Psoas muscle (tissue), 8 donors: ENCODE measurements at regions of chr3 and their contacts with region 1.

Region 1: DNA sequence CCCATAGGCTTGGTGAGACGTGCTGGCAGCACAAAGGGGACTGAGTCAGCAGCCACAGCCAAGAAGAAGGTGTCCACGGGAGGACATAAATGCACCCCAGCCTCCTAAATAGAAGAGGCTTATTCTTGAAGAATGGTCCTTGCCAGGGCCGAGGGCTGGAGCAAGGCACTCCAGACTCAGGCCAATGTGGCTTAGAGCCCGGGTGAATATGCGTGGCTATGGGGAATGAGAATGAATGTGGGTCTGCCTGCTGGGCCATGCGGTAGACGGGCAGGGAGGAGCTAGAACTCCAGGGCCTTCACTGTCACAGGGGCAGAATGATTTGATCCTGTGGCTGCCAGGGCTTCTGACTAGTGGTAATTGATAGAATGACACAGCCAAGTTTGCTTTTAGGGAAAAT is 34.0 kb downstream of the DHX30 start:
- DNase-seq: no peak
- ATAC-seq: no peak
- H3K4me3 ChIP-seq: no peak overlapping the region
- H3K27ac ChIP-seq: no peak overlapping the region
- H3K4me1 ChIP-seq: no peaks in the 10 kb centered on the region
- H3K27me3 ChIP-seq: no peaks in the 10 kb centered on the region
- CTCF ChIP-seq: no peak

Region 2: GRCh38 chr3:47989981-47990440 is 153.0 kb after region 1 on chr3:
- intact Hi-C with region 1: loop called (anchors 5 kb)
- DNase-seq: peak; percentile 78 to 88
- ATAC-seq: peak; percentile 97 to 99 (median 98)
- H3K4me3 ChIP-seq: no peak overlapping the region
- H3K27ac ChIP-seq: peak overlapping the region; percentile 72
- H3K4me1 ChIP-seq: peaks cover 44% of the 10 kb centered on the region
- H3K27me3 ChIP-seq: no peaks in the 10 kb centered on the region
- CTCF ChIP-seq: peak; percentile 90